Activated CD4-positive, alpha-beta memory T cell treated with anti-CD3 and anti-CD28 coated beads for 36 hours (primary cell): ENCODE measurements at regions of chr11 and their contacts with region 1.

Region 1: GRCh38 chr11:17991783-17992433 is 20.9 kb downstream of the SERGEF start:
- DNase-seq: peak; percentile 57
- H3K4me3 Mint-ChIP-seq: no peak overlapping the region
- H3K27ac Mint-ChIP-seq: no peak overlapping the region
- H3K4me1 Mint-ChIP-seq: peaks cover 2% of the 10 kb centered on the region
- H3K27me3 Mint-ChIP-seq: no peaks in the 10 kb centered on the region

Region 2: GRCh38 chr11:18105802-18106574 is 114.1 kb after region 1 on chr11 and contains the start of gene SAAL1:
- CTCF ChIA-PET with region 1: interaction called, 13 read pairs
- POLR2A ChIA-PET with region 1: no interaction called
- intact Hi-C with region 1: loop called (anchors 1 kb)
- DNase-seq: peak; percentile 94
- H3K4me3 Mint-ChIP-seq: peak within 1 kb of the TSS; percentile 92
- H3K27ac Mint-ChIP-seq: peak within 1 kb of the TSS; percentile 78
- H3K4me1 Mint-ChIP-seq: peaks cover 37% of the 10 kb centered on the region
- H3K27me3 Mint-ChIP-seq: peaks cover 4% of the 10 kb centered on the region
- total RNA-seq, gene SAAL1: 32.1 to 34.3 TPM